Transverse colon (tissue), 4 donors: ENCODE measurements at regions of chr12 and their contacts with region 1.

Region 1: GRCh38 chr12:21831791-21832344 is 57.4 kb upstream of the KCNJ8 start:
- DNase-seq: peak; percentile 9
- H3K4me3 ChIP-seq: no peak overlapping the region
- H3K27ac ChIP-seq: peak overlapping the region; percentile 18 to 64 (median 55)
- H3K4me1 ChIP-seq: peaks cover 0 to 14% (median 2%) of the 10 kb centered on the region in 4 donors
- H3K27me3 ChIP-seq: no peaks in the 10 kb centered on the region
- CTCF ChIP-seq: no peak
- EP300 ChIP-seq: no peak
- POLR2A ChIP-seq: no peak

Region 2: DNA sequence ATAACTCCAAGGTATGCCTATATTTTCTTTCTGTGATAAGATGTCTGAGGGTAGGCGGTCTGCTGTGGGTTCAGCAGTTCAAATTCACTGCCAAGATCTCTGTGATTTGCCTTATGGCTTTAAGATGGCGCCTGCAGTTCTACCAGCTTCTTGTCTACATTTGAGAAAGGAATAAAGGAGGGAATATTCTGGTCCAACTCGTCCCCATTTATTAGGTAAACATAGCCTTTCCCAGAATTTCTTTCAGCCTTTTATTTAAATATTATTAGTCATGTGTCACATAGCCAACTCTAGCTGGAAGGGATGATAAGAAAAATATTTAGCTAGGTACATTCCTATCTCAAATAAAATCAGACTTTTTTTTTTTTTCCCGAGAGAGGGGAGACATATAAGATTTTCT is 106.1 kb before region 1 on chr12:
- in situ Hi-C with region 1: loop called in 1 of 4 experiments (anchors 25 kb)
- intact Hi-C with region 1: no loop called
- DNase-seq: no peak
- H3K4me3 ChIP-seq: no peak overlapping the region
- H3K27ac ChIP-seq: no peak overlapping the region
- H3K4me1 ChIP-seq: no peaks in the 10 kb centered on the region
- H3K27me3 ChIP-seq: no peaks in the 10 kb centered on the region
- CTCF ChIP-seq: no peak
- EP300 ChIP-seq: no peak
- POLR2A ChIP-seq: no peak

Region 3: GRCh38 chr12:21971344-21971743 is 139.5 kb after region 1 on chr12:
- in situ Hi-C with region 1: no loop called
- intact Hi-C with region 1: no loop called
- DNase-seq: no peak
- H3K4me3 ChIP-seq: no peak overlapping the region
- H3K27ac ChIP-seq: no peak overlapping the region
- H3K4me1 ChIP-seq: no peaks in the 10 kb centered on the region
- H3K27me3 ChIP-seq: no peaks in the 10 kb centered on the region
- CTCF ChIP-seq: no peak
- EP300 ChIP-seq: no peak
- POLR2A ChIP-seq: no peak